Activated T-helper 1 cell treated with anti-CD3 and anti-CD28 coated beads, Interleukin-12 subunit alpha, Interleukin-12 subunit beta, Interleukin-2, Interleukin-4 antibody, amounts not matched to agents 30 ng/mL and 10 ng/mL and 1 ng/mL, durations not matched to agents 14 hours and 24 hours and 36 hours (primary cell): ENCODE measurements at regions of chr18 and their contacts with region 1.

Region 1: DNA sequence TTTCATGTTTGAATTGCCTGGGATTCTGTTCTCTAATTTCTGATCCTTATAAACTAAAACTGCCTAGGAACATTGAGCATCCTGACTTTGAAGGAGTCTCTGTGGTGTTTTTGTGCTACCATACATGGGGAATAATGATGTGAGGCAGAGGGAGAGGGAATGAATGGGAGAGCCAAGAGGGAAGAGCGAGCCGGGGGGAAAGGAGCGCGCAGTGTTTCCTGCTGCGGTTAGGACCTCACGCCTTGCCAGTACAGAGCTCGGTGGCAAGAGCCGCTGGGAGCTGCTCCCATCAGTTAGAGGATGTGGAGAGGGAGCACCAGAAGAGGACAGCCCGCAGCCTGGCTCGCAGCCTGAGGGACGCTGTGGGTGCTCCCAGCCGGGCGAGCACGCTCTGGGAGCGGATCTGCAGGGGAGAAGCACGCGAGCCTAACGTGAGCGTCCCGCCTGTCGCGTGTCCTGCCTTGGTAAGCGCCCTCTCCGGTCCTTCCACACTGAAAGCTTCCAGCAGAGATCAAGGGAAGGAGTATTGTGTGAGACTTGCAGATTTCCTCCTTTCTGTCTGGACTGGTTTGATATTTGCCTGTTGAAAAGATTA is 114.7 kb downstream of the FAM210A start:
- DNase-seq: no peak
- H3K4me3 Mint-ChIP-seq: peak overlapping the region; percentile 80
- H3K27ac Mint-ChIP-seq: peak overlapping the region; percentile 83
- H3K4me1 Mint-ChIP-seq: peaks cover 73% of the 10 kb centered on the region
- H3K27me3 Mint-ChIP-seq: peaks cover 1% of the 10 kb centered on the region

Region 2: DNA sequence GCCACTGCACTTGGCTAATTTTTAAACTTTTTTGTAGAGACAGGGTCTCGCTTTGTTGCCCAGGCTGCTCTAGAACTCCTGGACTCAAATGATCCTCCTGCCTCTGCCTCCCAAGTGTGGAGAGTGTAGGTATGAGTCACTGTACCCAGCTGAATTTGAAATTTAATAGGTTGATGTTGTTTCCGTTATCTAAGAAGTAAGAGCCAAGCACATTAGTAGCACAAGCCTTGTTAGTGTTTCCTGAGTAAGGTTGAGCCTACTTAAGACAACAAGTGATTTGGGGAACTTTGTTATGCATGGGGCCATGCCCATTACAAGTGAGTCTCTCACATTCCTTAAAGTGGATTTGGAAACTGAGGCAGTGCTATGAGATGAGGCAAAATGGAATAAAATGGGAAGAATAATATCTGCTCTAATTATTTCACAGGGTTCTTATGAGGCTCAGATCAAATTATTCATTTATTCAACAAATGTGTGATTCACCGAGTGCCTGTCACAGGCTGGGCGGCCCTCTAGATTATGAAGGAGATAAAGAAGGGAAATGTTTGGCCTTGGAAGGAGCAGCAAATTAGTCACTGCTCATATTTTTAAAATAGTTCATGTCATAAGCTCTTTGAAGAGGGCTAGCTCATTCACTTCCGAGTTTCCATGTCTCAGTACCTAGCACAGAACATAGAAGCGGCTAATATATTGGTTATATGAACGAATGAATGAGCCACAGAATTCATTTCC is 175.9 kb before region 1 on chr18:
- intact Hi-C with region 1: loop called (anchors 1 kb)
- DNase-seq: no peak
- H3K4me3 Mint-ChIP-seq: no peak overlapping the region
- H3K27ac Mint-ChIP-seq: no peak overlapping the region
- H3K4me1 Mint-ChIP-seq: peaks cover 68% of the 10 kb centered on the region
- H3K27me3 Mint-ChIP-seq: no peaks in the 10 kb centered on the region

Region 3: GRCh38 chr18:13548966-13549879 is 62.5 kb before region 1 on chr18:
- intact Hi-C with region 1: no loop called
- DNase-seq: no peak
- H3K4me3 Mint-ChIP-seq: no peak overlapping the region
- H3K27ac Mint-ChIP-seq: no peak overlapping the region
- H3K4me1 Mint-ChIP-seq: no peaks in the 10 kb centered on the region
- H3K27me3 Mint-ChIP-seq: no peaks in the 10 kb centered on the region

Region 4: GRCh38 chr18:13566941-13567746 is 44.6 kb before region 1 on chr18:
- intact Hi-C with region 1: loop called (anchors 1 kb)
- DNase-seq: no peak
- H3K4me3 Mint-ChIP-seq: peak overlapping the region; percentile 61
- H3K27ac Mint-ChIP-seq: peak overlapping the region; percentile 87
- H3K4me1 Mint-ChIP-seq: peaks cover 72% of the 10 kb centered on the region
- H3K27me3 Mint-ChIP-seq: no peaks in the 10 kb centered on the region

Region 5: DNA sequence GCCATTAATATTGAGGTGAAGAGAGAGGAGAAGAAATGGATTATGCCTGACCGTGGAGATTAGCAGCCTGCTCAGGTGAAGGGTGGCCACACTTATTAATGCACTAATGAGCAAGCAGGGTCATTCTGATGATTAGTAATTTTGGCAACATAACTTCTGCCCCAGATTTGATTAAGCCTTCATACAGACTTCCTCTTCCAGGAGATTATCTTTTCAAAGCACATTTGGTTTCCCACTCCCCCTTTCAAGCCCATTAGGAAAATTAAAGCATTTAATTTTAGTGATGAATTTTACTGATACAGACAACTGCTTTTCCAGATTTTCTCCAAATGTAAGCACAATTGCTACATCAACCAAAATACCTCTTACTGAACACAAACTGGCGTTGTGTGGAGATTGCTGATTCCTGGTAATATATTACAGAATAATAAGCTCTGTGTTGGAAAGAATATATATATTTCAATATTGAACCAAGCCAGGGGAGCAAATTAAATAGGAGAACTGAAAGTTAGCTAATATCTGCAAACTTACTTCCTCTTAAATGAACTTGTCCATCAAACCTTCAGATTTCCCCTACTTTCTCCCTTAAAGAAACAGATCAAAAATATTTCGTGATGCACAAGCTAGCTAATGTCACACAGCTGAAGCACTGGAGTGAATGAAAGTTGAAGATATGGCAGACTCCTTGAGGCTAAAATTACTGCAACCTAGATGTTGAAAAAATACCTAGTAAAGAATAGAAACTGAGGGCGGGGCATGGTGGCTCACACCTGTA is 26.1 kb before region 1 on chr18:
- intact Hi-C with region 1: loop called (anchors 1 kb)
- DNase-seq: no peak
- H3K4me3 Mint-ChIP-seq: no peak overlapping the region
- H3K27ac Mint-ChIP-seq: no peak overlapping the region
- H3K4me1 Mint-ChIP-seq: peaks cover 55% of the 10 kb centered on the region
- H3K27me3 Mint-ChIP-seq: no peaks in the 10 kb centered on the region